ENCODE measurements at regions of chr2 and their contacts with region 1.

Region 1: DNA sequence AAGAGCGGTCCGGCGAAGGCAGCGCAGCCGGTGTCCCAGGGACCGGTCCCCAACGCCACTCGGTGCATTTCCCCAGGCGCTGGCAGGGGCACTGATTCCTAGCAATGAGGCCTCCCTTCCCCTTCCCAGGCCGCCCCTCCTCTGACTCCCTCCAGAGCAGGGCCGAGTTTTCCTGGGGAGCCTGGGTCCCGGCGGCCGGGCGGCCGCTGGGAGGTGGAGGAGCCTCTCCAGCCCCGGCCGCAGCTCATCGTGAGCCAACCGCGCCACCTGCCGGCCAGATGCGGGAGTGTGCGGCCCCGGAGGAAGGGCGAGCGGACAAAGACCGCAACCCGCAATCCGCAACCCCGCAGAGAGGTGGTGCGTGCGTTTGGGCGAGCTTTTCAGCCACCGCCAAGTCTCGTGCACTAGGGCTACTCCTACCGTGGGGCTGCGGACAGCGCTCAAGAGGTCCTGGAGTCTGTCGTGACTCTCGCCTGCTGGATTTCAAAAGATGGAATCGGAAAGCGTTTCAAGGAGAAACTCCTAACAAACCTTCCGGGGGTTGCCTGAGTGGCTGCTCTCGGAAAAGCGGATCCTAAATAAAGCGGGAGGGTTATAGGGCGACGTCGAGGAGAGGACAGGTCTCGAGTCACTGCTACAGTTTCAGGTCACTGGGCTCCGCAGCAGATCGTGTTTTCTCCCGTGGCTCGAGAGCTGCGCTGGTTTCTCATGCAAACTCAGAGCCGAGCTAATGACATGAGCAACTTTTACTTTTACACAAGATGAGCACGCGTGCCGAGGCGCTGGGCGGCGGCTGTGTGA is 1.5 kb upstream of the EPHA4 start:
- DNase-seq: peak; percentile 84 to 90
- ATAC-seq: peak; percentile 80 to 87 (median 82)
- H3K4me3 ChIP-seq: peak overlapping the region; percentile 59 to 92 (median 78)
- H3K27ac ChIP-seq: peak overlapping the region; percentile 55 to 95 (median 90)
- H3K4me1 ChIP-seq: peaks cover 0 to 41% (median 20%) of the 10 kb centered on the region in 9 donors
- H3K27me3 ChIP-seq: peaks cover 0 to 97% (median 14%) of the 10 kb centered on the region in 7 donors
- CTCF ChIP-seq: peak; percentile 95 to 99 (median 97)

Region 2: GRCh38 chr2:219912491-219912921 is 1661.1 kb before region 1 on chr2:
- intact Hi-C with region 1: loop called in 1 of 10 experiments (anchors 10 kb)
- DNase-seq: no peak
- ATAC-seq: peak in 7 of 8 donors; percentile 66 to 81 (median 72)
- H3K4me3 ChIP-seq: no peak overlapping the region
- H3K27ac ChIP-seq: no peak overlapping the region
- H3K4me1 ChIP-seq: peaks cover 0 to 12% (median 4%) of the 10 kb centered on the region in 9 donors
- H3K27me3 ChIP-seq: no peaks in the 10 kb centered on the region
- CTCF ChIP-seq: peak in 3 of 9 donors; percentile 44 to 48 (median 44)

Region 3: DNA sequence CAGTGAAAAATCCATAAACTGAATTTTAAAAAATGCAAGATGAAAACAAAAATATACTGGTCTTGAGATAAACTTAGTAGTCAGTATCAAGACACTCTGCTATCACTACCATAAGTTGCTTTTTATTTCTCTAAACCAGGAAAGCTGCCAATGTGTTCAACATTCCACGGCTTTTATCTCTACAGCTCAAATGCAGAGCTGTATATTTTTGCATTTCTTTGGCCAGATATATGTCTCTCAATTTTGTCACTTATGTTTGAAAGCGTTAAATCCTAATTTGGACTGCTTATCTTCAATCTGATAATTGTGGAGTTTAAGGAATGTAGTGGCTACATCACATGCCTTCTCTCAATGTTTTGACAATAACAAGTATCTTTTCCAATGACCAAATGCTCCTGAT is 611.1 kb before region 1 on chr2:
- intact Hi-C with region 1: loop called in 1 of 10 experiments (anchors 5 kb)
- DNase-seq: no peak
- ATAC-seq: no peak
- H3K4me3 ChIP-seq: no peak overlapping the region
- H3K27ac ChIP-seq: no peak overlapping the region
- H3K4me1 ChIP-seq: peaks cover 6 to 50% (median 28%) of the 10 kb centered on the region in 9 donors
- H3K27me3 ChIP-seq: no peaks in the 10 kb centered on the region
- CTCF ChIP-seq: no peak

Region 4: GRCh38 chr2:221109552-221109951 is 464.1 kb before region 1 on chr2:
- intact Hi-C with region 1: loop called in 9 of 10 experiments (anchors 1 to 10 kb)
- DNase-seq: no peak
- ATAC-seq: no peak
- H3K4me3 ChIP-seq: no peak overlapping the region
- H3K27ac ChIP-seq: no peak overlapping the region
- H3K4me1 ChIP-seq: peaks cover under 1 to 13% (median 8%) of the 10 kb centered on the region in 9 donors
- H3K27me3 ChIP-seq: peaks cover 0 to 3% (median 0%) of the 10 kb centered on the region in 7 donors
- CTCF ChIP-seq: no peak

Region 5: DNA sequence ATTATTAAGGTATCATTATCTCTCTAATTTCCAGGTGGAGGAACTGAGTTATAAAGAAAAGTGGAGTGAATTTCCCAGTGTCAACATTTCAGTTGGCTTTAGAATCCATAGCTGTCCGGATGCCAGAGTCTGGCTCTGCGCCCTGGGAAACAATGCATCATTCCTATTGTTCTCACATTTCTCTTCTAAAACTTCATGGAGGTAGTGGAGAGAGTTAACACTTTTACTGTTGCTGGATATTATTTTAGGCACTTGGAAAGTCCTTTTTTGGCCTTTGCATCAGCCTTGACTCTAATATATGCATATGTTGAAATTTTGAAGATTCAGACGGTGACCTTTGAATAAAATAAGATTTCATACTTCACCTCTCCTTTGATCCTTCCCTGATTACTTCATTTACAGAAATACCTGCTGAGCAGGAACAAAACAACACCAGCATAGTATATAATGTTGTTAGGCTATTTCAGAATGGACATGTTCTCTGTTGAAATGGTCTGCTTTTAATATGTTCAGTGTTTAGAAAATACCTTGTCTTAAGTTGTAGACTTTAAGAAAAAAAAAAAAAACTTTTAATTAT is 150.3 kb before region 1 on chr2:
- intact Hi-C with region 1: loop called in 1 of 10 experiments (anchors 5 kb)
- DNase-seq: peak; percentile 20 to 62
- ATAC-seq: peak in 5 of 8 donors; percentile 33 to 89 (median 72)
- H3K4me3 ChIP-seq: no peak overlapping the region
- H3K27ac ChIP-seq: peak overlapping the region in 6 of 10 donors; percentile 2 to 56 (median 30)
- H3K4me1 ChIP-seq: peaks cover 0 to 29% (median 5%) of the 10 kb centered on the region in 9 donors
- H3K27me3 ChIP-seq: no peaks in the 10 kb centered on the region
- CTCF ChIP-seq: no peak

Region 6: DNA sequence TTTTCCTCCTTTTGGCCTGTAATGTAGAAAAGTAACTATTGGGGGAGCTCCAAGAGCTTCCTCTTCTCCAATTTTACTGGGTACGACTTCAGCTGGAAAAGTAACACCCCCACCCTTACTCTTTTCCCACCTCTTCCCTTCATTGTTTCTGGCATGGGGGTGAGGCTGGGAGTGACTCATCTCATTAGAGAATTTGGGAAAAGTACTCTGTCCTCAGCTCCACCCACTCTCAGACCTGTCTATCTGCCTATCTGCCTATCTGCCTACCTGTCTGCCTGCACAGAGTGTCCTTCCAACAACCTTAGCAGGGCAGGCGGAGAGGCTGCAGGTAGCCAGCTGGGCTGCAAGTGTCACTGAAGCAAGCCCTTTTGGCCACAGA is 95.2 kb before region 1 on chr2:
- intact Hi-C with region 1: loop called in 1 of 10 experiments (anchors 10 kb)
- DNase-seq: no peak
- ATAC-seq: peak in 6 of 8 donors; percentile 29 to 79 (median 56)
- H3K4me3 ChIP-seq: no peak overlapping the region
- H3K27ac ChIP-seq: peak overlapping the region in 4 of 10 donors; percentile 8 to 29 (median 20)
- H3K4me1 ChIP-seq: peaks cover 0 to 20% (median 13%) of the 10 kb centered on the region in 9 donors
- H3K27me3 ChIP-seq: no peaks in the 10 kb centered on the region
- CTCF ChIP-seq: peak in 2 of 9 donors; percentile 18 to 38

Measured in heart right ventricle (tissue), 16 donors.